ENCODE measurements at regions of chr4 and their contacts with region 1.

Region 1: DNA sequence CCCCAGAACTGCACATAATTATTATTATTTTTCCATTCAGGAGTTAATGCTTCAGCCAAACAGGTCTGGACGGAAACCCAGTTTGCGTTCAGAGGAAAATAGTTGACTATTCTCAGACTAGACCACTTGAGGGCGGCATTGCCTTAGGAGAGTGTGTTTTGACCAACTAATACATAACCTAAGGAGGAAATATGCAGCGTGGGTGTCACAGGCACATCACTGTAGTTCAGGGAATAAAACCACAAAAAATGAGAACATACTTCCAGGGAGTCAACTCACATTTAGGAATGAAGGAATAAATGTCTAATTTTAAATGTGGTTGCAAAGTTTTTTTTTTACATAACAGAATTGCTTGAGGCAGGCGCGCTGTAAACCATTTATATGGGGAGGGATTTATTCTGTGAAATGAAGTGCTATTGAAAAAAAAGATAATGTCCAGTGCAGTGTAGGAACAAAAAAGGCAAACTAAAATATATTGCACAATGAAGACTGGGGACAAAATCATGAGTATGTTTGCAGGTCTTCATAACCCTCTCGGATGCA is 93.3 kb downstream of the SYNPO2 start:
- DNase-seq: peak; percentile 74
- H3K4me3 Mint-ChIP-seq: no peak overlapping the region
- H3K27ac Mint-ChIP-seq: no peak overlapping the region
- H3K4me1 Mint-ChIP-seq: no peaks in the 10 kb centered on the region
- H3K27me3 Mint-ChIP-seq: no peaks in the 10 kb centered on the region

Region 2: DNA sequence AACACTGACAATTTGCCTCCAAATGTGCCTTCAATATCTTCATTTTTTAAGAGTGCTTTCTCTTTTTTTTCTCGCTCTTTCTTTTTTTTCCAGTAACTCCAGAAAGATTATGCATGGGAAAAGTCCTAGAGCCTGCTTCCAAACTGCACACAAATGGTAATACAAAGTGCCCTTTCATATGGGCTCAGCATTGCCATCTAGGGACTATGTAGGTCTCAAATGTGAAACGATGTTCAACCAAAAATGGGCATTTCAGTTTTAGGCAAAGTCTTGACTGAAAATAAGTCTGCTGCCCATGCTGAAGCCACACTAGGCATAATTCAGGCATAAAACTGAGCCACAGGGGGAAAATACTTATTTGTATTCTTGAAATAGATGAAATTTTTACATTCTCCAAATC is 27.7 kb before region 1 on chr4:
- CTCF ChIA-PET with region 1: no interaction called
- intact Hi-C with region 1: no loop called
- DNase-seq: no peak
- H3K4me3 Mint-ChIP-seq: no peak overlapping the region
- H3K27ac Mint-ChIP-seq: no peak overlapping the region
- H3K4me1 Mint-ChIP-seq: no peaks in the 10 kb centered on the region
- H3K27me3 Mint-ChIP-seq: no peaks in the 10 kb centered on the region

Region 3: DNA sequence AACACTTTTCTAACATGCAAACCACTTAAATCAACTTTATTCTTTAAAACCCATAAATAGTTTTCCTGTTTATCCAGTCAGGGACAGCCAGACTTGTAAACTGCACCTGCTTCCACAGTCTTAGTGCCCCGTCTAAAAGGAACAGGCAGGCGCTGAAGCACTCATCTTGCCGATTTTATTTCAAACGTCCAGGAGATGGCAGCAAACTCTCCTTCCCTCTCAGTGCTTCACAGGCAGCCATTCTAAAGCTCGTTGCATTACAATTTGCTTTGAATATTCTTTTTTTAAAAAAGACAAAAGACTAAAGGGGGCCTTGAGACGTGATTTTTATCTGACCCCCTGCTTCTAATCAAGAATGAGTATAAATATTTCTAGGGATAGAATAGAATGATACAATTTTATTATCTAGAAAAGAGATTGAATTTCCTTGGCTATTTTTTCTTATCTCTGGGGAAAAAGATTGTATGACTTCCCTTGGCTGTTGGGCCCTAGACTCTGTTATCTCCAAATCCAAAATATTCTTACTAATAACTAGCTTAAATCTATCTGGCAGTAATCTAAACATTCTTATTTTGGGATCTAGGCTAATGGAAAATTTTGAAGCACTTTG is 60.1 kb after region 1 on chr4:
- CTCF ChIA-PET with region 1: interaction called, 41 read pairs
- intact Hi-C with region 1: loop called (anchors 1 kb)
- DNase-seq: peak; percentile 75
- H3K4me3 Mint-ChIP-seq: no peak overlapping the region
- H3K27ac Mint-ChIP-seq: no peak overlapping the region
- H3K4me1 Mint-ChIP-seq: peaks cover 13% of the 10 kb centered on the region
- H3K27me3 Mint-ChIP-seq: no peaks in the 10 kb centered on the region

Region 4: GRCh38 chr4:119286377-119287002 is 304.6 kb after region 1 on chr4:
- CTCF ChIA-PET with region 1: interaction called, 3 read pairs
- intact Hi-C with region 1: loop called (anchors 1 kb)
- DNase-seq: peak; percentile 52
- H3K4me3 Mint-ChIP-seq: no peak overlapping the region
- H3K27ac Mint-ChIP-seq: no peak overlapping the region
- H3K4me1 Mint-ChIP-seq: peaks cover 11% of the 10 kb centered on the region
- H3K27me3 Mint-ChIP-seq: no peaks in the 10 kb centered on the region

Region 5: DNA sequence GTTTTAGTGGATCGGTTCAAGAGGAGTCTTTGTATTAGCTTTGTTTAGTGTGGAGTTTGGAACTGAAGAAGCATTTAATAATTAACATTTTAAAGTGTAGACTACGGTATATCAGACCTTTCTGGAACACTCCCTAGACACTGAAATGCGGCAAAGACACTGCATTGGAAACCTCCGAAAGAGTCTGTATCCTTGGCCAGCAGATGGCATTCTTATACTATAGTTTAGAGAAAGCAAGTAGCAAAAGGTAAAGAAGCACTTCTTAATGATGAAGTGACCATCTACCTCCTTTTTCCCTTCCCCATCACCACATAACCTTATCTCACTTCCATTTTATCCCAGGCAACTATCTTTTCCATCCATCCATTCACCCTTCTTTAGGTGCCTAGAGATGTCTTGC is 332.4 kb after region 1 on chr4:
- CTCF ChIA-PET with region 1: no interaction called
- intact Hi-C with region 1: loop called (anchors 1 kb)
- DNase-seq: peak; percentile 43
- H3K4me3 Mint-ChIP-seq: no peak overlapping the region
- H3K27ac Mint-ChIP-seq: no peak overlapping the region
- H3K4me1 Mint-ChIP-seq: no peaks in the 10 kb centered on the region
- H3K27me3 Mint-ChIP-seq: no peaks in the 10 kb centered on the region

Region 6: GRCh38 chr4:119490335-119490734 is 508.4 kb after region 1 on chr4:
- CTCF ChIA-PET with region 1: no interaction called
- intact Hi-C with region 1: loop called (anchors 10 kb)
- DNase-seq: peak; percentile 6
- H3K4me3 Mint-ChIP-seq: no peak overlapping the region
- H3K27ac Mint-ChIP-seq: no peak overlapping the region
- H3K4me1 Mint-ChIP-seq: no peaks in the 10 kb centered on the region
- H3K27me3 Mint-ChIP-seq: no peaks in the 10 kb centered on the region

Region 7: DNA sequence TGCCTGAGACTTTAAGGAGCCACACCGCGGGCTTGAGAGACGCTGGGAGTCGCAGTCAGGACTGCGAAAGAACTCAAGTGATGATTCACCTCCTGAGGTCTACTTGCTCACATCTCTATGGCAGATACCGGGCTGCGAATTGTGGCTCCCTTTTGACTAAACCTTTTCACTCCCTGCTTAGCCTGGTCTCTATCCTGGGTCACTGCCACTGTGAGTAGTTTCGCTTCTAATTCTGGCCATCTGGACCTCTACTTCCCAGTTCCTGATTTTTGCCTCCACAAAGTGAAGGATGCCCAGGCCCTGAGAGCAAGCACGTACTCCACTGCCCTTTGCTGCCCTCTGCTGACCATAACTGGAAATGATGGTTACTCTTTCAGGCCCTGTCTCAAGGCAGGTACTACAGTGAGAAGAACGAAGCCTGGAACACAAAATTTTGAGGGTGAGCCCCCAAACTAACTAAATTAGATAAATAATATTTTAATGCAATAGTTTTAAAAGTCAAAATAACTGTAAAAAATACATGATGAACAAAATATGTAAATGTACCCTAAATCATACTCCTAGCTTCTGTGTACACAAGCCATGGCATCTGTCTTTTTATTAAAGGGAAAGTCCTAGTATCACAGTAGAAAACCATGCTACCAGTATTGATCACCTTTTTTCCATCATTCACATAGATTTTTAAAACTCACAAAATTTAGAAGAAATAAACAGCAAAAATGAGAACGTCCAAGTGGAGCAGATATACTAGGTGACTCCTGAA is 1068.0 kb after region 1 on chr4:
- CTCF ChIA-PET with region 1: interaction called, 4 read pairs
- intact Hi-C with region 1: loop called (anchors 2 kb)
- DNase-seq: peak; percentile 82
- H3K4me3 Mint-ChIP-seq: no peak overlapping the region
- H3K27ac Mint-ChIP-seq: no peak overlapping the region
- H3K4me1 Mint-ChIP-seq: peaks cover 2% of the 10 kb centered on the region
- H3K27me3 Mint-ChIP-seq: no peaks in the 10 kb centered on the region

Measured in activated naive CD4-positive, alpha-beta T cell treated with anti-CD3 and anti-CD28 coated beads for 36 hours (primary cell).